Heart left ventricle (tissue), 16 donors: ENCODE measurements at regions of chr1 and their contacts with region 1.

Region 1: GRCh38 chr1:147815498-147815897 is 55.1 kb upstream of the GJA5 start:
- DNase-seq: no peak
- ATAC-seq: no peak
- H3K4me3 ChIP-seq: no peak overlapping the region
- H3K27ac ChIP-seq: no peak overlapping the region
- H3K4me1 ChIP-seq: peaks cover 0 to 13% (median 0%) of the 10 kb centered on the region in 12 donors
- H3K27me3 ChIP-seq: no peaks in the 10 kb centered on the region
- CTCF ChIP-seq: peak in 3 of 12 donors; percentile 12 to 20 (median 19)
- POLR2A ChIP-seq: no peak

Region 2: DNA sequence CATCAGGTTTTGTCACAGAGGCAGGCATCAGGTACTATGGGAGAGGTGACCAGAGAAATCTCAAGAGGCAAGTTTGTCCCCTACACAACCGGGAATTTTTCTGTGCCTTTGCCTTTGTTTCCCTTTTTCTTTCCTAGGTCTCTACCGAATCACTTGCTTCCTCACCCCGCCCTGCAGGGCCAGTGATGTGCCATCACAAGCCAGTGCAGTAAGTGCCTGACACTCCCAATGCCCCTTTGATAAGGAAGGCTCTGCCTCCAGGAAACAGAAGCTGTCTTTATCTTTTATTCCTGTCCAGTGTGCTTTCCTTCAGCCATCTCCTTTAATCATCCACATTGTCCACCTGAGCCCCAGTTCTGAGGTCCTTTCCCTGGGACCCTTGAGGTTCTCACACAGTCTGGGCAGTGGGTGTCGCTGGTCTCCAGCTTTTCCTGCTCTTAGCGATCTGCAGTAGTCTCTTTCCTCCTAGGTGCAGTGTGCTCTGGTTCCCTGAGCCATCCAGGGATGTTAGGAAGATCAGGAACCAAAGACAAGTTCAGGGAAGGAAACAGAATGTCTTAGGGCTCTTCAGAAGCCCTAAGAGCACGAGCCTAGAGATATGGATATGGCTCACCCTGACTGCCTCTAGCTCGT is 91.7 kb before region 1 on chr1:
- intact Hi-C with region 1: loop called in 1 of 10 experiments (anchors 5 kb)
- DNase-seq: peak; percentile 38 to 66 (median 51)
- ATAC-seq: peak; percentile 83 to 97 (median 94)
- H3K4me3 ChIP-seq: no peak overlapping the region
- H3K27ac ChIP-seq: no peak overlapping the region
- H3K4me1 ChIP-seq: peaks cover 0 to 11% (median 0%) of the 10 kb centered on the region in 12 donors
- H3K27me3 ChIP-seq: no peaks in the 10 kb centered on the region
- CTCF ChIP-seq: peak; percentile 35 to 79 (median 72)
- POLR2A ChIP-seq: no peak

Region 3: DNA sequence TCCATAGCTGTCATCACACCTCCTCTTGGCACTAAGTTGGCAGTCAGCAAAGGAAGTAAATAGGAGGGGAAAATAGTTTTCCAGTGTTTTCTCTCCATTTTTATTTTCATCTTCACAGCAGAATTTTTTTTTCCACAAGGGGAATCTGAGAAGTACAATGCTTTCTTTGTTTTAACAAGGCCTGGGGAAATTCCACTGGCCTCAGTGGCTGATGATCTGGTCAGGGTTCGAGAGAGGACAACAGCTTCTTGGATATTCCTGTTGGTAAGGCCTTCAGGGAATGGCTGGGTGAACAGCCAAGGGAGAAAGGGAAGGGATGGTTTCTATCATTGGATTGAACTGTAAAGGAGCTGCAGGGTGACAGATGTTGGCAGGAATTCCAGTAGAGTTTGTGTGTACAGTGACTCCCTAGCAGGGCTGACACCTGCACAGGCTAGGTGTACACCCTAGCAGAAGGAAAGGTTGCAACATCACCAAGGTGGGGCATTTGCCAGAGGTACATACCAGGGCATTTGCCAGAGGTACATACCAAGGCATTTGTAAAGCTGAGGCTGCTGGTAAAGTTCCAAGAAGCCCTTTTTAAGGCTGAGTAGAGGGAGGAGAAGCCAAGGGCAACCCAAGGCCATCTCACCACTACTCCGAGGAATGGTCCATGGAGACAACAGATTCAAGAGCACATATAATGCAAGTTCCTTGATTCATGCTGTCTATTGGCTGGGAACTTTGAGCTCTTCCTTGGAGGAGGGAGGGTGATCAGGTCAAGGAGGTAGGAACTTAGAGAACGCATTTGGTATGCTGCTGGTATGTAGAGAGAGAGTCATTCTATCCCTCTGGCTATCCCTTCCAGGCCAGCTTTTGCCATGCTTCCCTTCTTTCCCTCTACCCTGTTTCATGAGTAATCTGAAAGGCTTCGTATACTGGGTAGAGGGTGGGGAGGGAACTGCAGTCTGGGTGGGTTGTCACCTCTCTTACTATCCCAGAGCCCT is 58.2 kb before region 1 on chr1:
- intact Hi-C with region 1: loop called in 1 of 10 experiments (anchors 10 kb)
- DNase-seq: no peak
- ATAC-seq: peak in 1 of 4 donors; percentile 19
- H3K4me3 ChIP-seq: no peak overlapping the region
- H3K27ac ChIP-seq: peak overlapping the region in 1 of 12 donors; percentile 24
- H3K4me1 ChIP-seq: peaks cover 0 to 48% (median 20%) of the 10 kb centered on the region in 12 donors
- H3K27me3 ChIP-seq: no peaks in the 10 kb centered on the region
- CTCF ChIP-seq: no peak
- POLR2A ChIP-seq: no peak

Region 4: DNA sequence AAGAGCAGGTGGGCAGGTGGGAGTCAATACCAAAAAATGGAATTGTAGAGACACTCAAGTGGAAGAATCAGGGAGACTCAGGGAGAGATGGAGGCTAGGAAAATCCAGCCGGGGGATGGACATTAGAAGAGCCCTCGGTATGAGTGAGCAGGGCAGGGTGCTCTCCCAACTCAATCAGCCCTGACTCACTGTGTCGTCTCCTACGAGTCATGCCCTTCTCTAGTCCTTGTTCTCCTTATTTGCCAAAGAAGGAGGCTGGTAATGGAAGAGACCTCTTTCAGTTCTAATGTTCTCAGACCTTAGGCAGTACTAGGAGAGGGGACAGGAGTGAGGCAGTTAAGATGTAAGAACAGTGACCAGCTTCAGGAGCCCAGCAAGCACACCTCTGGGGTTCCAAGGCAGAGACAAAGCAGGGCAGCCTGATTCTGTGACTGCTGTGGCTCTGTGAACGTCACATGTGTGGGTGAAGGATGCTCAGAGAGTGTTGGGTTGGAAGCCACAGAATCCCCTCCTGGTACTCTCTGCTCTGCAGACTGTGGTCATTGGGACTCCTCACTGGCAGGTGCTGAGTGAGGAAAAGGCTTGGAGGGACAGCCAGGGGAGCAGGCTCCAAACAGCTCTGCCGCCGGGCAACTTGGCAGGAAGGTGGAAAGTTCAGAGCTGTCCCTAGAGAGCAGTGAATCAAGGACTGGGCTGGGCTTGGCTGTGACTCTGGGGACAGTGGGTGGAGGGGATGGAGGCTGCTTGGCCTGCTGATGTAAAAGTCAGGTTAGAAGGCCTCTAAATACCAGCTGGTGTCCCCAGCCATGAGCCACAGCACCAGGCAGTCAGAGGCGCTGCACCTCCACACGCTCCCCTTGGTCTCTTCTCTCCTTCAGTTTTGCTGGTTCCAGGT is 44.0 kb before region 1 on chr1:
- intact Hi-C with region 1: loop called in 1 of 10 experiments (anchors 5 kb)
- DNase-seq: peak; percentile 78 to 89 (median 83)
- ATAC-seq: peak; percentile 96 to 98 (median 97)
- H3K4me3 ChIP-seq: peak overlapping the region in 9 of 12 donors; percentile 26 to 48 (median 38)
- H3K27ac ChIP-seq: peak overlapping the region in 11 of 12 donors; percentile 47 to 82 (median 59)
- H3K4me1 ChIP-seq: peaks cover 11 to 70% (median 42%) of the 10 kb centered on the region in 12 donors
- H3K27me3 ChIP-seq: no peaks in the 10 kb centered on the region
- CTCF ChIP-seq: no peak
- POLR2A ChIP-seq: no peak

Region 5: DNA sequence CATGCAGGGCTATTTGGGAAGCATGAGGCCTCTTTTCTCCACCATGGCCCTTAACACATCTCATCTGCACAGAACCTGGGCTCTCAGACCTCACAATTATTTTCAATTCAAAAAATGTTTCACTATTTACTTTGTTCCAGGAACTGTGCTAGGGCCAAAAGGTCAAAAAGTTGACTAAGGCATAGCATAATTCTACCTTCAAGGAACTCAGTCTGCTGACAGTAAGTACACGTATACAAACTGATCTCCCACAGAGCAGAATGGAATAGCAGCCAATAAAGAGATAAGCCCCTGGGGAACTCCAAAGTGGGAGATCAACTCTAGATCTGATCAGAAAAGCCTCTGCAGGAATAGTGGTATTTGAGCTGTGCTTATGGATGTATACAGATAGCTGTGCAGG is 53.5 kb after region 1 on chr1:
- intact Hi-C with region 1: no loop called
- DNase-seq: no peak
- ATAC-seq: no peak
- H3K4me3 ChIP-seq: no peak overlapping the region
- H3K27ac ChIP-seq: no peak overlapping the region
- H3K4me1 ChIP-seq: no peaks in the 10 kb centered on the region
- H3K27me3 ChIP-seq: no peaks in the 10 kb centered on the region
- CTCF ChIP-seq: no peak
- POLR2A ChIP-seq: no peak